ENCODE measurements at regions of chr5 and their contacts with region 1.

Region 1: GRCh38 chr5:134586866-134587524 is 45.6 kb downstream of the SAR1B start:
- DNase-seq: peak; percentile 81 to 99
- H3K4me3 ChIP-seq: 0 out of 8 replicates have a peak overlapping the region, but pooled peaks of 1 of the 4 experiments have one; percentile 38
- H3K27ac ChIP-seq: no peak overlapping the region
- H3K4me1 ChIP-seq: peaks cover 6 to 12% (median 9%) of the 10 kb centered on the region in 4 experiments
- H3K27me3 ChIP-seq: no peaks in the 10 kb centered on the region
- CTCF ChIP-seq: peak in 2 of 3 experiments; percentile 91 to 97; a peak in 3 of 4 replicates
- EP300 ChIP-seq: no peak
- POLR2A ChIP-seq: no peak
- RAD21 ChIP-seq: peak; percentile 89 to 90

Region 2: DNA sequence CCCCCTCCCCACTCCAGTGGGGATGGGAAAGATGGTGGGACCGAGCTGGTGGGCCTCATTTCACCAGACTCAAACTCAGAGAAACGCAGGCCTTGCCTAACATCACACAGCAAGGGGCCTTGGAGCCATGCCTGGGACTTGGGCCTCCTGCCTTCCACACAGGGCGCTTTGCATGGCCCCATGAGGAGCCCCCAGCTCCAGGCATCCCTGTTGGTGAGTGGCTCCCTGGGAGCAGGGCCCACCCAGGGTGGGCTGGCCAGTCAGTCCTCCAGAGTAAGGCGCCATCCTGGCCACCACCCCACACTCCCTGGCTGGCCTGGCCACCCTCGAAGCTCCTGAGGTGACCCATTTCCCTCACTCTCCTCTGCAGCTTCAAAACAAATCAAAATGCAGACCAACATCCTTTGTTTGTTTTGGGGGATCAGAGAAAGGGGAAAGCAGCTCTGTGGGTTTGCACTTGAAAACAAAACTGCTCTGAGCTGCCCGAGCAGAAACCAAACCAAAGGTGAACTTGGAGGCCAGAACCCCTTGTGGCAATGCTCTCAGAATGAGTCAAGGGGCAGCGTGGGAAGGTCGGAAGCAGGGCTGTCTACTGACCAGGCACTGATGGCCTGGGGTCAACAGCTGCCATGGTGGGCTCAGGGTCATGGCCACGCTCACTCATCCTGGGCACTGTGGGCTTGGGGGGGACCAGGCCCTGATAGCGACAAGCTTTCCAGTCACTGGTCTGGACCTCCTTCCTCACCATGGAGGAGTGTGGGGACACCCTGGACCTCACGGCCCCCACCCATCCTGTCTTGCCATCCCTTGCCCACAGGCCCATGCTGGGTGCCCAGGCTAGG is 545.2 kb before region 1 on chr5:
- CTCF ChIA-PET with region 1: no interaction called
- POLR2A ChIA-PET with region 1: no interaction called
- DNase-seq: no peak
- H3K4me3 ChIP-seq: no peak overlapping the region
- H3K27ac ChIP-seq: no peak overlapping the region
- H3K4me1 ChIP-seq: peaks cover 3 to 8% (median 4%) of the 10 kb centered on the region in 4 experiments; a peak in 6 of 7 replicates
- H3K27me3 ChIP-seq: peaks cover 0 to 3% (median under 1%) of the 10 kb centered on the region in 4 experiments; a peak in 3 of 7 replicates
- CTCF ChIP-seq: no peak
- EP300 ChIP-seq: no peak
- POLR2A ChIP-seq: no peak
- RAD21 ChIP-seq: no peak

Region 3: GRCh38 chr5:134184155-134185135 is 402.6 kb before region 1 on chr5:
- CTCF ChIA-PET with region 1: interaction called, 11 read pairs
- POLR2A ChIA-PET with region 1: no interaction called
- DNase-seq: peak; percentile 38 to 90
- H3K4me3 ChIP-seq: no peak overlapping the region
- H3K27ac ChIP-seq: no peak overlapping the region
- H3K4me1 ChIP-seq: no peaks in the 10 kb centered on the region
- H3K27me3 ChIP-seq: no peaks in the 10 kb centered on the region
- CTCF ChIP-seq: peak; percentile 93 to 97 (median 97)
- EP300 ChIP-seq: no peak
- POLR2A ChIP-seq: no peak
- RAD21 ChIP-seq: peak; percentile 92 to 94

Region 4: DNA sequence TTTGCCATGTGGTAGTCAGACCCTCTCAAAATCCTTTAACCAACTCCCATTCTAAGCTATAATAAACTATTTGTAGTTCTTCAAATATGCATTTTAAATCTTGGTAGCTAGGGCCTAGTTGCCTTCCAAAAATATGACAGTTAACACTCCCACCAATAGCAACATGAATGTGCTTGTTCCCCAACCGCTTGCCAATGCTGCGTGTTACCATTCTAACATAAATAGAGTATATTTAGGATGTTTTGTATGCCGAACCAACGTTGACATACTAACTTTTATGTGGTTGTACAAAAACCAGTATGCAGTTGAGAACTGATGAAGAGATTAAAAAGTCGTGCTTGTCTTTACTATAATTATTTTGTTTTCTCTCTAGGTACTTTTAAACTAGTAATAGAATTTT is 206.6 kb before region 1 on chr5:
- CTCF ChIA-PET with region 1: interaction called, 16 read pairs
- POLR2A ChIA-PET with region 1: no interaction called
- DNase-seq: no peak
- H3K4me3 ChIP-seq: no peak overlapping the region
- H3K27ac ChIP-seq: no peak overlapping the region
- H3K4me1 ChIP-seq: no peaks in the 10 kb centered on the region
- H3K27me3 ChIP-seq: no peaks in the 10 kb centered on the region
- CTCF ChIP-seq: no peak
- EP300 ChIP-seq: no peak
- POLR2A ChIP-seq: no peak
- RAD21 ChIP-seq: no peak

Region 5: DNA sequence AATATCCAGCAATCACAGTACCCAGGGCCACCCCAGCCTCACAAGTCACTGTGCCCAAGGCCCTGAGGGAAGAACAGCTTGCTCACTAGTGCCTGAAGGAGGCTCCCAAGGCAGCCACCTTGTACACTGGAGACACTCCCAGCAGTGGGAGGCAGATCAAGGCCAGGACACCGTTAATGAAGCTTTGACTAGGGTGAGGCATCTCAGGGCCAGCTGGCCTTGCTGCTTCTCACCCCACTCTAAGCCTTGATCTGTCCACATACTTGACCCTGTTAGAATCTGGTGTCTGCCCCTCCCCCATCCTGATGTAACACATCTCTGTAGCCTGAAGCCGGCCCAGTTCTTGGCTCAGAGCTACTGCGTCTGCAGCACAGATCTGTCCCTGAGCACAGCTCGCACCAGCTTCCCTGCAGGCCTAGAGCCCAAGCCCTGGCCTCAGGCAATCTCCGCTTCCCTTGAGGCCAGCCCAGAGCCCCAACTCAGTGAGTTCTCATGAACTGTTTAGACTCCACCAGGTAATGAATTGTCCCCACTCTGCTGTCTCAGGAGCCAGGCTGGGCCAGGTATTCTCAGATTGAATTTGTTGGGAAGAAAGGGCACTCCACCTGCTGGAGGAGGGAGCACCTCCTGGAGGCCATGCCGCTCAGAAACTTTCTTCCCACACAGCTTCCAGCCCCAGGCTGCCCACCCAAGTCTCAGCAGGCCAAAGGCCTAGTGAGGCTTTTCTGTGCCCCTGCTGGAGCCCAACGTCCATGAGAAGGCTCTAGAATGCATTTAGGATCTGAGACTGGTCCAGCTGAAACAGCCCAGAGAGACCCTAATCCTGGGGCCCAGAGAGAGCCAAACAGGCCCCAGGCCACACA is 75.0 kb before region 1 on chr5:
- CTCF ChIA-PET with region 1: interaction called, 12 read pairs
- POLR2A ChIA-PET with region 1: interaction called, 3 read pairs
- DNase-seq: peak in 1 of 2 experiments; percentile 73
- H3K4me3 ChIP-seq: peak overlapping the region in 2 of 4 experiments; percentile 20 to 32; a peak in 3 of 8 replicates
- H3K27ac ChIP-seq: peak overlapping the region; percentile 77
- H3K4me1 ChIP-seq: peaks cover 16 to 23% (median 19%) of the 10 kb centered on the region in 4 experiments
- H3K27me3 ChIP-seq: no peaks in the 10 kb centered on the region
- CTCF ChIP-seq: peak; percentile 49 to 56 (median 54)
- EP300 ChIP-seq: no peak
- POLR2A ChIP-seq: peak; percentile 52 to 63
- RAD21 ChIP-seq: peak; percentile 61 to 73

Region 6: GRCh38 chr5:134561871-134562296 is 25.1 kb before region 1 on chr5:
- CTCF ChIA-PET with region 1: interaction called, 47 read pairs
- POLR2A ChIA-PET with region 1: interaction called, 4 read pairs
- DNase-seq: no peak
- H3K4me3 ChIP-seq: no peak overlapping the region
- H3K27ac ChIP-seq: no peak overlapping the region
- H3K4me1 ChIP-seq: no peaks in the 10 kb centered on the region
- H3K27me3 ChIP-seq: no peaks in the 10 kb centered on the region
- CTCF ChIP-seq: peak in 2 of 3 experiments; percentile 59 to 67; a peak in 3 of 4 replicates
- EP300 ChIP-seq: no peak
- POLR2A ChIP-seq: no peak
- RAD21 ChIP-seq: peak; percentile 46 to 69

Region 7: GRCh38 chr5:134609232-134609851 is 22.3 kb after region 1 on chr5:
- CTCF ChIA-PET with region 1: interaction called, 38 read pairs
- POLR2A ChIA-PET with region 1: interaction called, 3 read pairs
- DNase-seq: no peak
- H3K4me3 ChIP-seq: no peak overlapping the region
- H3K27ac ChIP-seq: no peak overlapping the region
- H3K4me1 ChIP-seq: no peaks in the 10 kb centered on the region
- H3K27me3 ChIP-seq: no peaks in the 10 kb centered on the region
- CTCF ChIP-seq: no peak
- EP300 ChIP-seq: no peak
- POLR2A ChIP-seq: no peak
- RAD21 ChIP-seq: no peak

Region 8: DNA sequence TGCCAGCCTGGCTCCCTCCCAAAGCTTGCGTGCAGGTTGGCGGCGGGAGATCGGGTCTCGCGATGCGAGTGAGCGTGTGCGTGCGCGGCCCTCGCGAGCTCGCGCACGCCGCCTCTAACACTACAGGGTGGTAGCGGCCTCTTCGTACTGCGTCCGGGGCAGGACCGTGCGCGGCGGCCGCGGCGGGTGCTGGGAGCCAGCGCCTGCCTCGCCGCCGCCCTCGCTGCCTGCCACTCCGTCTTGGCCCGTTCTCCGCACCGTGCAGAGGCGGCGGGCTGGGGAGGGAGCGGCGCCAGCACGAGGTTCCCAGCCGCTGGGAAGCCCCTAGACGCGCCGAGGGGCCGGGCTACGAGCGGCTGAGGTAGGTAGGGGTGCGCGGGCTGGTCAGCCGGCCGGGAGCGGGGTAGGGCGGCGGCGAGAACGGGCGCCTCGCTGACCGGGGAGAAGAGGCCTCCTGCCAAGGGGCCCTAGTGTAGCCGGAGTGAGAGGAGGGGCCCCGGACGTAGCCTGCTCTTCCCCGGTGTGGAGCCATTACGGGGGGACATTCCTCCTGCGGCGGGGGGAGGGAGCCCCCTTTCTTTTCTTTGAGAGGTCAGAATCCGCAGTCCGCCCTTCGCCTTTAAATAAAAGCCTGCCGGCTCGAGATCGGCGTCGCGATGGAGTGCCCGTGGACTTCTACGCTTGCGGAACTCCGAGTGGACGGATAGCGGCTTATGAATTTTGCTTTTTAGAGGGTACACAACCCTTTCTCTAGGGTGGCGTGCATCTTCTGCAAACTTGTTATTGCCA is 259.1 kb after region 1 on chr5 and contains the start of gene C5orf24:
- CTCF ChIA-PET with region 1: no interaction called
- POLR2A ChIA-PET with region 1: no interaction called
- DNase-seq: peak; percentile 58 to 84
- H3K4me3 ChIP-seq: peak within 1 kb of the TSS; percentile 62 to 88 (median 72)
- H3K27ac ChIP-seq: peak within 1 kb of the TSS; percentile 66
- H3K4me1 ChIP-seq: no peaks in the 10 kb centered on the region
- H3K27me3 ChIP-seq: no peaks in the 10 kb centered on the region
- CTCF ChIP-seq: no peak
- EP300 ChIP-seq: peak in 1 of 2 experiments; percentile 15; a peak in 1 of 3 replicates
- POLR2A ChIP-seq: peak; percentile 82 to 86
- RAD21 ChIP-seq: no peak
- total RNA-seq, gene C5orf24: 19.6 and 20.2 TPM in 2 replicates